ENCODE measurements at regions of chr10 and their contacts with region 1.

Region 1: GRCh38 chr10:67779465-67780203 is 58.4 kb downstream of the DNAJC12 start:
- DNase-seq: peak in 33 of 35 experiments; percentile 11 to 90 (median 63)
- ATAC-seq: peak; percentile 79 to 91 (median 86)
- H3K4me3 ChIP-seq: no peak overlapping the region
- H3K4me3 Mint-ChIP-seq: no peak overlapping the region
- H3K27ac ChIP-seq: no peak overlapping the region
- H3K27ac Mint-ChIP-seq: no peak overlapping the region
- H3K4me1 ChIP-seq: peaks cover 0 to 2% of the 10 kb centered on the region in 2 experiments
- H3K4me1 Mint-ChIP-seq: peaks cover 21 to 28% (median 21%) of the 10 kb centered on the region in 3 donors
- H3K27me3 ChIP-seq: no peaks in the 10 kb centered on the region
- H3K27me3 Mint-ChIP-seq: no peaks in the 10 kb centered on the region

Region 2: GRCh38 chr10:67666416-67667034 is 113.1 kb before region 1 on chr10:
- CTCF ChIA-PET with region 1: interaction called, 13 to 16 read pairs
- POLR2A ChIA-PET with region 1: no interaction called
- DNase-seq: peak in 1 of 35 experiments; percentile 42
- ATAC-seq: no peak
- H3K4me3 ChIP-seq: no peak overlapping the region
- H3K4me3 Mint-ChIP-seq: no peak overlapping the region
- H3K27ac ChIP-seq: no peak overlapping the region
- H3K27ac Mint-ChIP-seq: no peak overlapping the region
- H3K4me1 ChIP-seq: no peaks in the 10 kb centered on the region
- H3K4me1 Mint-ChIP-seq: no peaks in the 10 kb centered on the region
- H3K27me3 ChIP-seq: no peaks in the 10 kb centered on the region
- H3K27me3 Mint-ChIP-seq: peaks cover 0 to 4% of the 10 kb centered on the region in 2 donors

Region 3: GRCh38 chr10:67697724-67698131 is 81.9 kb before region 1 on chr10:
- CTCF ChIA-PET with region 1: interaction called, 103 to 152 read pairs
- POLR2A ChIA-PET with region 1: interaction called in 1 of 2 experiments, 5 read pairs
- DNase-seq: peak in 15 of 35 experiments; percentile 1 to 72 (median 9)
- ATAC-seq: peak; percentile 65 to 88 (median 77)
- H3K4me3 ChIP-seq: no peak overlapping the region
- H3K4me3 Mint-ChIP-seq: no peak overlapping the region
- H3K27ac ChIP-seq: no peak overlapping the region
- H3K27ac Mint-ChIP-seq: peak overlapping the region in 1 of 2 donors; percentile 34
- H3K4me1 ChIP-seq: peaks cover 0 to 7% of the 10 kb centered on the region in 2 experiments
- H3K4me1 Mint-ChIP-seq: peaks cover 8 to 14% (median 8%) of the 10 kb centered on the region in 3 donors
- H3K27me3 ChIP-seq: no peaks in the 10 kb centered on the region
- H3K27me3 Mint-ChIP-seq: peaks cover 31 to 36% of the 10 kb centered on the region in 2 donors

Region 4: GRCh38 chr10:67988606-67989005 is 209.0 kb after region 1 on chr10:
- CTCF ChIA-PET with region 1: no interaction called
- POLR2A ChIA-PET with region 1: no interaction called
- DNase-seq: no peak
- ATAC-seq: no peak
- H3K4me3 ChIP-seq: no peak overlapping the region
- H3K4me3 Mint-ChIP-seq: no peak overlapping the region
- H3K27ac ChIP-seq: no peak overlapping the region
- H3K27ac Mint-ChIP-seq: no peak overlapping the region
- H3K4me1 ChIP-seq: no peaks in the 10 kb centered on the region
- H3K4me1 Mint-ChIP-seq: peaks cover 6 to 11% (median 9%) of the 10 kb centered on the region in 3 donors
- H3K27me3 ChIP-seq: no peaks in the 10 kb centered on the region
- H3K27me3 Mint-ChIP-seq: no peaks in the 10 kb centered on the region

Region 5: DNA sequence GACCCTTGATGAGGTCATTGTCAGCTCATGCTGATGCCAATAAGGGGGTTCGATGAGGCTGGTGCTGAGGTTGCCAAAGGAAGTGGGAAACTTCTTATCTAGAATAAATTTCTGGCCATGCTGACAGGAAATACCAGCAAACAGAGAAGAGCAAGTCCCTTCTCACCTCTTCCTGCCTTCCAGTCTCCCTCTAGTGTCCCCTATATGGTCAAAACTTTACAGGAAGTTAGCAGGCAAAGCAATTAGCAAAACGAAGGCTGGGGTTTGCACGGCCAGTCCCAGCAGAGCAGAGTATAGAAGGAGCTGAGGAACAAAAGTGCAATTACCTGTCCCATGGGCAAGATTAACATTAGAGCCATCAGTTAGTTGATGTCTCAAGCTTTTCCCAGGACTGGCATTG is 1808.8 kb after region 1 on chr10:
- CTCF ChIA-PET with region 1: no interaction called
- POLR2A ChIA-PET with region 1: no interaction called
- DNase-seq: peak in 1 of 35 experiments; percentile 6
- ATAC-seq: peak in 3 of 4 experiments; percentile 50 to 71 (median 55)
- H3K4me3 ChIP-seq: no peak overlapping the region
- H3K4me3 Mint-ChIP-seq: no peak overlapping the region
- H3K27ac ChIP-seq: no peak overlapping the region
- H3K27ac Mint-ChIP-seq: peak overlapping the region; percentile 53 to 71
- H3K4me1 ChIP-seq: peaks cover 0 to 6% of the 10 kb centered on the region in 2 experiments
- H3K4me1 Mint-ChIP-seq: peaks cover 11 to 14% (median 14%) of the 10 kb centered on the region in 3 donors
- H3K27me3 ChIP-seq: no peaks in the 10 kb centered on the region
- H3K27me3 Mint-ChIP-seq: no peaks in the 10 kb centered on the region

Measured in T-cell (primary cell).